ENCODE measurements at regions of chr19 and their contacts with region 1.

Region 1: GRCh38 chr19:18388100-18388959 is 2.4 kb downstream of the GDF15 start:
- DNase-seq: peak; percentile 88 to 92 (median 90)
- ATAC-seq: peak; percentile 55
- H3K4me3 ChIP-seq: peak overlapping the region; percentile 89
- H3K27ac ChIP-seq: peak overlapping the region; percentile 84
- H3K4me1 ChIP-seq: peaks cover 17 to 47% of the 10 kb centered on the region in 2 experiments
- H3K27me3 ChIP-seq: no peaks in the 10 kb centered on the region
- CTCF ChIP-seq: peak; percentile 95 to 97 (median 96)
- EP300 ChIP-seq: peak; percentile 7; the same call in 1 of the 2 replicates
- POLR2A ChIP-seq: peak; percentile 64
- RAD21 ChIP-seq: peak; percentile 60 to 70

Region 2: GRCh38 chr19:18041054-18041453 is 347.3 kb before region 1 on chr19:
- CTCF ChIA-PET with region 1: no interaction called
- POLR2A ChIA-PET with region 1: no interaction called
- in situ Hi-C with region 1: no loop called
- intact Hi-C with region 1: no loop called
- DNase-seq: no peak
- ATAC-seq: no peak
- H3K4me3 ChIP-seq: no peak overlapping the region
- H3K27ac ChIP-seq: no peak overlapping the region
- H3K4me1 ChIP-seq: peaks cover 3 to 13% of the 10 kb centered on the region in 2 experiments; a peak in 3 of 5 replicates
- H3K27me3 ChIP-seq: peaks cover 14 to 18% of the 10 kb centered on the region in 2 experiments
- CTCF ChIP-seq: no peak
- EP300 ChIP-seq: no peak
- POLR2A ChIP-seq: no peak
- RAD21 ChIP-seq: no peak

Region 3: GRCh38 chr19:18203863-18204393 is 184.4 kb before region 1 on chr19 and contains the start of gene RAB3A:
- CTCF ChIA-PET with region 1: no interaction called
- POLR2A ChIA-PET with region 1: interaction called, 11 read pairs
- in situ Hi-C with region 1: no loop called
- intact Hi-C with region 1: no loop called
- DNase-seq: peak; percentile 96 to 100 (median 98)
- ATAC-seq: peak; percentile 96
- H3K4me3 ChIP-seq: peak within 1 kb of the TSS; percentile 68
- H3K27ac ChIP-seq: peak within 1 kb of the TSS; percentile 86
- H3K4me1 ChIP-seq: peaks cover 14 to 45% of the 10 kb centered on the region in 2 experiments; a peak in 4 of 5 replicates
- H3K27me3 ChIP-seq: no peaks in the 10 kb centered on the region
- CTCF ChIP-seq: 0 out of 6 replicates have a peak, but pooled peaks of 1 of the 3 experiments have one; percentile 2
- EP300 ChIP-seq: no peak
- POLR2A ChIP-seq: no peak
- RAD21 ChIP-seq: no peak
- polyA plus RNA-seq, gene RAB3A: 0.17 TPM in 1 of 2 experiments, not detected in the other

Region 4: GRCh38 chr19:18322759-18323460 is 65.4 kb before region 1 on chr19 and contains the start of gene LSM4:
- CTCF ChIA-PET with region 1: no interaction called
- POLR2A ChIA-PET with region 1: interaction called, 11 read pairs
- in situ Hi-C with region 1: no loop called
- intact Hi-C with region 1: no loop called
- DNase-seq: peak; percentile 97 to 100 (median 98)
- ATAC-seq: peak; percentile 96
- H3K4me3 ChIP-seq: peak within 1 kb of the TSS; percentile 69
- H3K27ac ChIP-seq: peak within 1 kb of the TSS; percentile 90
- H3K4me1 ChIP-seq: peaks cover 45 to 58% of the 10 kb centered on the region in 2 experiments
- H3K27me3 ChIP-seq: no peaks in the 10 kb centered on the region
- CTCF ChIP-seq: peak; percentile 42 to 69 (median 63); a peak in 4 of 6 replicates
- EP300 ChIP-seq: no peak
- POLR2A ChIP-seq: peak; percentile 91
- RAD21 ChIP-seq: peak in 1 of 2 experiments; percentile 56; a peak in 3 of 4 replicates
- polyA plus RNA-seq, gene LSM4: 11.9 to 29.7 TPM

Region 5: GRCh38 chr19:18333662-18334389 is 54.5 kb before region 1 on chr19:
- CTCF ChIA-PET with region 1: interaction called, 3 read pairs
- POLR2A ChIA-PET with region 1: interaction called, 21 read pairs
- in situ Hi-C with region 1: no loop called
- intact Hi-C with region 1: no loop called
- DNase-seq: no peak
- ATAC-seq: 0 out of 3 replicates have a peak, but pooled peaks have one; percentile 29
- H3K4me3 ChIP-seq: no peak overlapping the region
- H3K27ac ChIP-seq: no peak overlapping the region
- H3K4me1 ChIP-seq: peaks cover 7 to 31% of the 10 kb centered on the region in 2 experiments; a peak in 4 of 5 replicates
- H3K27me3 ChIP-seq: no peaks in the 10 kb centered on the region
- CTCF ChIP-seq: no peak
- EP300 ChIP-seq: no peak
- POLR2A ChIP-seq: no peak
- RAD21 ChIP-seq: no peak

Region 6: GRCh38 chr19:18349524-18350128 is 38.7 kb before region 1 on chr19:
- CTCF ChIA-PET with region 1: no interaction called
- POLR2A ChIA-PET with region 1: interaction called, 15 read pairs
- in situ Hi-C with region 1: no loop called
- intact Hi-C with region 1: loop called (anchors 5 kb)
- DNase-seq: peak; percentile 59 to 73 (median 67)
- ATAC-seq: peak; percentile 78
- H3K4me3 ChIP-seq: no peak overlapping the region
- H3K27ac ChIP-seq: no peak overlapping the region
- H3K4me1 ChIP-seq: peaks cover 0 to 5% of the 10 kb centered on the region in 2 experiments; a peak in 1 of 5 replicates
- H3K27me3 ChIP-seq: no peaks in the 10 kb centered on the region
- CTCF ChIP-seq: peak; percentile 78 to 96 (median 86)
- EP300 ChIP-seq: peak; percentile 13; the same call in 1 of the 2 replicates
- POLR2A ChIP-seq: no peak
- RAD21 ChIP-seq: peak; percentile 89 to 91

Region 7: GRCh38 chr19:18373892-18374629 is 14.3 kb before region 1 on chr19:
- CTCF ChIA-PET with region 1: no interaction called
- POLR2A ChIA-PET with region 1: interaction called, 207 read pairs
- in situ Hi-C with region 1: no loop called
- intact Hi-C with region 1: loop called (anchors 1 kb)
- DNase-seq: peak; percentile 96 to 99 (median 96)
- ATAC-seq: peak; percentile 93
- H3K4me3 ChIP-seq: peak overlapping the region; percentile 1; the same call in 1 of the 2 replicates
- H3K27ac ChIP-seq: peak overlapping the region; percentile 97
- H3K4me1 ChIP-seq: peaks cover 59 to 72% of the 10 kb centered on the region in 2 experiments
- H3K27me3 ChIP-seq: no peaks in the 10 kb centered on the region
- CTCF ChIP-seq: no peak
- EP300 ChIP-seq: peak; percentile 92
- POLR2A ChIP-seq: peak; percentile 84
- RAD21 ChIP-seq: peak in 1 of 2 experiments; percentile 9; a peak in 1 of 4 replicates

Region 8: GRCh38 chr19:18419195-18419698 is 30.9 kb after region 1 on chr19 and contains the start of gene SSBP4:
- CTCF ChIA-PET with region 1: interaction called, 5 read pairs
- POLR2A ChIA-PET with region 1: interaction called, 244 read pairs
- in situ Hi-C with region 1: no loop called
- intact Hi-C with region 1: no loop called
- DNase-seq: peak; percentile 84 to 95 (median 88)
- ATAC-seq: peak; percentile 13
- H3K4me3 ChIP-seq: peak within 1 kb of the TSS; percentile 60
- H3K27ac ChIP-seq: peak within 1 kb of the TSS; percentile 97
- H3K4me1 ChIP-seq: peaks cover 54 to 96% of the 10 kb centered on the region in 2 experiments
- H3K27me3 ChIP-seq: no peaks in the 10 kb centered on the region
- CTCF ChIP-seq: peak; percentile 17 to 95 (median 66); a peak in 4 of 6 replicates
- EP300 ChIP-seq: peak; percentile 63
- POLR2A ChIP-seq: no peak
- RAD21 ChIP-seq: peak in 1 of 2 experiments; percentile 67; a peak in 3 of 4 replicates
- polyA plus RNA-seq, gene SSBP4: 1.1 to 1.9 TPM